B cell (primary cell): ENCODE measurements at regions of chr12 and their contacts with region 1.

Region 1: GRCh38 chr12:131830335-131830913 is 2.2 kb downstream of the MMP17 start:
- DNase-seq: peak; percentile 76
- ATAC-seq: peak; percentile 46
- H3K4me3 ChIP-seq: peak overlapping the region in 4 of 5 experiments; percentile 60 to 75 (median 67)
- H3K4me3 Mint-ChIP-seq: peak overlapping the region; percentile 79
- H3K27ac ChIP-seq: no peak overlapping the region
- H3K27ac Mint-ChIP-seq: peak overlapping the region; percentile 20
- H3K4me1 ChIP-seq: peaks cover 26 to 31% of the 10 kb centered on the region in 2 donors
- H3K4me1 Mint-ChIP-seq: peaks cover 33% of the 10 kb centered on the region
- H3K27me3 ChIP-seq: peaks cover 0 to 17% (median 8%) of the 10 kb centered on the region in 4 experiments
- H3K27me3 Mint-ChIP-seq: peaks cover 14% of the 10 kb centered on the region
- CTCF ChIP-seq: peak; percentile 69

Region 2: GRCh38 chr12:130916251-130916911 is 914.0 kb before region 1 on chr12:
- CTCF ChIA-PET with region 1: interaction called, 6 read pairs
- POLR2A ChIA-PET with region 1: no interaction called
- intact Hi-C with region 1: loop called (anchors 5 kb)
- DNase-seq: peak; percentile 80
- ATAC-seq: no peak
- H3K4me3 ChIP-seq: peak overlapping the region in 1 of 5 experiments; percentile 7
- H3K4me3 Mint-ChIP-seq: peak overlapping the region; percentile 59
- H3K27ac ChIP-seq: no peak overlapping the region
- H3K27ac Mint-ChIP-seq: no peak overlapping the region
- H3K4me1 ChIP-seq: peaks cover 6 to 11% of the 10 kb centered on the region in 2 donors
- H3K4me1 Mint-ChIP-seq: peaks cover 10% of the 10 kb centered on the region
- H3K27me3 ChIP-seq: peaks cover 0 to 6% (median 0%) of the 10 kb centered on the region in 4 experiments
- H3K27me3 Mint-ChIP-seq: peaks cover 48% of the 10 kb centered on the region
- CTCF ChIP-seq: peak; percentile 96

Region 3: DNA sequence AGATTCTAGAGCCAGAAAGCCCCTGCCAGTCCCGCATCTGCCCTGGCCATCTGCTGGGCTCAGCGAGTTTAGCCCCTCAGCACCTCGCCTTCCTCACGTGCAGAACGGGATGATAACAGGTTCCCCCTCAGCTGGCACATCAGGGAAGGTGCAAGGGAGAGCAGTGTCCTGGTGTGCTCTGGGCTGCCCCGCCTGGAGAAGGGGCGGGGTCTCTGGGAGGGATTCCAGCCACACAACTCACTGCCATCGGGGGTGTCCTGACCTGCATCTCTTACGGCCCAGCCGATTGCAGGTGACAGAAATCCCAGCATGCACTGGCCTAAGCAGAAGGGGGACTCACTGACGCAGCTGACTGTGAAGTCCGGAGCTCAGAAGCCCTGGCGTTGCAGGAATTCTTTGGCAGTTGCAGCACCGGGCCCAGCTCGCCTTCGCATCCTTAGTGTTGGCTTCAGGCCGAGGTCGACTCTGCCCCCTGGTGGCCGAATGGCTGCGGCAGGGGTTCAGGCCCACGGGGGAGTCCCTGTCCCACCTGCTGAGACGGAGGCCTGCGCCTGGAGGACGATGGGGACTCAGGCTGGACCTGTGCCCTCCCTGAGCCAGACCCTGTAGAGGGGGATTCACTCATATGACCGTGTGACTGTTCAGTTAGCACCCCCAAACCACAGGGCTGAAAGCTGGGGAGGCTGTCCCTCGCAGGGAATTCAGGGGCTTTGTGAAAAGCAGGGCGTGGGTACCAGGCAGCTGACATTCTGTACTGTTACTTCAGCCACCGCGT is 698.1 kb before region 1 on chr12:
- CTCF ChIA-PET with region 1: interaction called, 11 read pairs
- POLR2A ChIA-PET with region 1: no interaction called
- intact Hi-C with region 1: no loop called
- DNase-seq: peak; percentile 80
- ATAC-seq: peak; percentile 68
- H3K4me3 ChIP-seq: no peak overlapping the region
- H3K4me3 Mint-ChIP-seq: no peak overlapping the region
- H3K27ac ChIP-seq: no peak overlapping the region
- H3K27ac Mint-ChIP-seq: peak overlapping the region; percentile 53
- H3K4me1 ChIP-seq: peaks cover 0 to 3% of the 10 kb centered on the region in 2 donors
- H3K4me1 Mint-ChIP-seq: no peaks in the 10 kb centered on the region
- H3K27me3 ChIP-seq: peaks cover 0 to 7% (median 0%) of the 10 kb centered on the region in 4 experiments
- H3K27me3 Mint-ChIP-seq: no peaks in the 10 kb centered on the region
- CTCF ChIP-seq: peak; percentile 91

Region 4: DNA sequence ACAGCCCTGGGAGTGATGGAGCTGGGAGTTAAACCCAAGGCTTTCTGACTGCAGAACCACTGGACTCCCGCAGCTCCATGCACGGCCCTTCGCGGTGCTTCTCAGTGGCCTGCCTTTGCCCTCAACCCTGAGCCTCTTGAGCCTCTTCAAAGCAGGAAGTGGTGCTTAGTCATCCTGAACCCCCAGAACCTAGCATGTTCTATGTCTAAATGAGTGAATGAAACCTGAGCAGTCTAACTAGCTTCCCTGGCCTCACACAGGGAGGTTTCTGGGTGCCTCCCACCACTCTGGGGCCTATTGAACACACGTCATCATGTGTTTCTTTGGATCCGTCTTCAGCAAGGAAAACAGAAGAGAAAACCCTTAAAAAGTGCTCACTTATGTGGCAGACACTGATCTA is 237.5 kb before region 1 on chr12:
- CTCF ChIA-PET with region 1: no interaction called
- POLR2A ChIA-PET with region 1: no interaction called
- intact Hi-C with region 1: no loop called
- DNase-seq: no peak
- ATAC-seq: no peak
- H3K4me3 ChIP-seq: no peak overlapping the region
- H3K4me3 Mint-ChIP-seq: no peak overlapping the region
- H3K27ac ChIP-seq: no peak overlapping the region
- H3K27ac Mint-ChIP-seq: no peak overlapping the region
- H3K4me1 ChIP-seq: peaks cover 7 to 10% of the 10 kb centered on the region in 2 donors
- H3K4me1 Mint-ChIP-seq: peaks cover 8% of the 10 kb centered on the region
- H3K27me3 ChIP-seq: no peaks in the 10 kb centered on the region
- H3K27me3 Mint-ChIP-seq: no peaks in the 10 kb centered on the region
- CTCF ChIP-seq: no peak

Region 5: GRCh38 chr12:131673888-131674257 is 156.6 kb before region 1 on chr12:
- CTCF ChIA-PET with region 1: no interaction called
- POLR2A ChIA-PET with region 1: no interaction called
- intact Hi-C with region 1: no loop called
- DNase-seq: no peak
- ATAC-seq: no peak
- H3K4me3 ChIP-seq: no peak overlapping the region
- H3K4me3 Mint-ChIP-seq: no peak overlapping the region
- H3K27ac ChIP-seq: no peak overlapping the region
- H3K27ac Mint-ChIP-seq: no peak overlapping the region
- H3K4me1 ChIP-seq: no peaks in the 10 kb centered on the region
- H3K4me1 Mint-ChIP-seq: no peaks in the 10 kb centered on the region
- H3K27me3 ChIP-seq: peaks cover 0 to 6% (median 0%) of the 10 kb centered on the region in 4 experiments
- H3K27me3 Mint-ChIP-seq: peaks cover 18% of the 10 kb centered on the region
- CTCF ChIP-seq: no peak

Region 6: GRCh38 chr12:131755305-131756113 is 74.9 kb before region 1 on chr12:
- CTCF ChIA-PET with region 1: interaction called, 12 read pairs
- POLR2A ChIA-PET with region 1: no interaction called
- intact Hi-C with region 1: loop called (anchors 1 kb)
- DNase-seq: peak; percentile 80
- ATAC-seq: peak; percentile 77
- H3K4me3 ChIP-seq: no peak overlapping the region
- H3K4me3 Mint-ChIP-seq: no peak overlapping the region
- H3K27ac ChIP-seq: no peak overlapping the region
- H3K27ac Mint-ChIP-seq: no peak overlapping the region
- H3K4me1 ChIP-seq: peaks cover 0 to 5% of the 10 kb centered on the region in 2 donors
- H3K4me1 Mint-ChIP-seq: peaks cover 6% of the 10 kb centered on the region
- H3K27me3 ChIP-seq: no peaks in the 10 kb centered on the region
- H3K27me3 Mint-ChIP-seq: no peaks in the 10 kb centered on the region
- CTCF ChIP-seq: peak; percentile 71

Region 7: GRCh38 chr12:131793243-131794022 is 37.0 kb before region 1 on chr12:
- CTCF ChIA-PET with region 1: no interaction called
- POLR2A ChIA-PET with region 1: no interaction called
- intact Hi-C with region 1: no loop called
- DNase-seq: no peak
- ATAC-seq: no peak
- H3K4me3 ChIP-seq: no peak overlapping the region
- H3K4me3 Mint-ChIP-seq: no peak overlapping the region
- H3K27ac ChIP-seq: no peak overlapping the region
- H3K27ac Mint-ChIP-seq: no peak overlapping the region
- H3K4me1 ChIP-seq: peaks cover 16 to 23% of the 10 kb centered on the region in 2 donors
- H3K4me1 Mint-ChIP-seq: peaks cover 23% of the 10 kb centered on the region
- H3K27me3 ChIP-seq: no peaks in the 10 kb centered on the region
- H3K27me3 Mint-ChIP-seq: no peaks in the 10 kb centered on the region
- CTCF ChIP-seq: no peak

Region 8: DNA sequence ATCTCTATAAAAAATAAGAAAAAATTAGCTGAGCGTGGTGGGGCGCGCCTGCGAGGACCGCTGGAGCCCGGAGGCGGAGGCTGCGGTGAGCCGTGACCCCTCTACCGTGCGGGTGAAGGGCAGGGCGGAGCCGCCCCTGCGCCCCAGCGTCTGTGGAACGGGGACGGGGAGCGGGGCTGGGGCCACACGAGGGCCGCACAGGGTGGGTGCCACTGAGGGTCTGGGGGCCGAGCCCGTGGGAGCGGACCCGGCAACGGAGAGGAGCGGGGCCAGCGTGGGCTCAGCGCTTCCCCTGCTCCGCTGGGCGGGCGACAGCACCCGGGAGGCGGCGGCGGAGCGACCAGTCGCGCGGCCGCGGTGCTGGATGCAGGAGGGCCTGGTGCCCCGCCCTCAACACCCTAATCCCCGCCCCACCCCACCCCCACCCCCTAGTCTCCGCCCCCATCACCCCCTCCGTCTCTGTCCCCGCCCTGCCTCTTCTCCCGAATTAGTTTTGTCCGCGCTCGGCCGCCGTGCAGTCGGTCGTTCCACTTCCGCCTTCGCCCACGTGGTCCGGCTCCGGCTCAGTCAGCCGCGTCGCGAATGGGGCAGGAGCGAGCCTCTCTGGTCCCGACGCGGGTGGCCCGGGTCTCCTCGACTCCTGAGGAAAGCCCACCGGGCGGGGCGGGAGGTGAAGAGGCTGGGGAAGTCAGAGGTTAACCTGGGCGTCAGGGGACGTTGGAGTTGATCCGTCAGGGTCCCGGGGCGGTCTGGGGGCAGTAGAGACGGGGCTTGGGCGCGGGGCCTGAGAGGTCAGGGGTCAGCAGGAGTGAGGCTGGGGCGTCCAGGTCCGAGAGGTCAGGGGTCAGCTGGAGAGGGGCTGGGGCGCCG is 98.5 kb after region 1 on chr12 and contains the start of gene PUS1:
- CTCF ChIA-PET with region 1: interaction called, 4 read pairs
- POLR2A ChIA-PET with region 1: interaction called, 3 read pairs
- intact Hi-C with region 1: loop called (anchors 10 kb)
- DNase-seq: peak; percentile 96
- ATAC-seq: peak; percentile 82
- H3K4me3 ChIP-seq: peak within 1 kb of the TSS; percentile 33 to 94 (median 86)
- H3K4me3 Mint-ChIP-seq: peak within 1 kb of the TSS; percentile 95
- H3K27ac ChIP-seq: peak within 1 kb of the TSS; percentile 55 to 85
- H3K27ac Mint-ChIP-seq: peak within 1 kb of the TSS; percentile 98
- H3K4me1 ChIP-seq: peaks cover 27 to 44% of the 10 kb centered on the region in 2 donors
- H3K4me1 Mint-ChIP-seq: peaks cover 33% of the 10 kb centered on the region
- H3K27me3 ChIP-seq: no peaks in the 10 kb centered on the region
- H3K27me3 Mint-ChIP-seq: no peaks in the 10 kb centered on the region
- CTCF ChIP-seq: no peak
- total RNA-seq, gene PUS1: 50.1 and 51.3 TPM in 2 replicates

Region 9: DNA sequence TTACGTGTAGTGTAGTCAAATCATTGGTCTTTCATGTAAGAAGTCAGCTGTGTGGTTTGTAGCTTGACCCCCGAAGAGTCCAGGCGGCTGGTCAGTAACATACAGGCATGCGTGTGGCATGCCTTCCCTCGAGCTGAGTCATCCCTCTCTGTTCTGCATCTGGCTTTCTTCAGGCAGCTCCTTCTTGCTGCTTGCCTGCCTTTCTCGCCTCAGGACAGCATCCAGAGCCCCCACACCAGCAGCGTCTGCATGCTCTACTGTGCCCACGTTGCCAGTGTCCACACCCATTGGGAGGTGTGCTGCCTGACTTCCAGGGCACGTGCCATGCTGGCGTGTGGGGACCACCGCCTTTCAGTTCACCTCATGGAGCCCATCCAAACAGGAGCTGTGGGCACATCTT is 216.1 kb after region 1 on chr12:
- CTCF ChIA-PET with region 1: no interaction called
- POLR2A ChIA-PET with region 1: no interaction called
- intact Hi-C with region 1: no loop called
- DNase-seq: no peak
- ATAC-seq: no peak
- H3K4me3 ChIP-seq: no peak overlapping the region
- H3K4me3 Mint-ChIP-seq: no peak overlapping the region
- H3K27ac ChIP-seq: no peak overlapping the region
- H3K27ac Mint-ChIP-seq: no peak overlapping the region
- H3K4me1 ChIP-seq: no peaks in the 10 kb centered on the region
- H3K4me1 Mint-ChIP-seq: no peaks in the 10 kb centered on the region
- H3K27me3 ChIP-seq: no peaks in the 10 kb centered on the region
- H3K27me3 Mint-ChIP-seq: no peaks in the 10 kb centered on the region
- CTCF ChIP-seq: no peak